Tibial artery (tissue), 4 donors: ENCODE measurements at regions of chr1 and their contacts with region 1.

Region 1: GRCh38 chr1:8314346-8315280 is 3.3 kb upstream of the SLC45A1 start:
- DNase-seq: peak; percentile 56 to 86
- H3K4me3 ChIP-seq: no peak overlapping the region
- H3K27ac ChIP-seq: no peak overlapping the region
- H3K4me1 ChIP-seq: peaks cover 0 to 46% (median 27%) of the 10 kb centered on the region in 4 donors
- H3K27me3 ChIP-seq: no peaks in the 10 kb centered on the region
- CTCF ChIP-seq: peak; percentile 80 to 95

Region 2: GRCh38 chr1:7980984-7981383 is 333.6 kb before region 1 on chr1:
- intact Hi-C with region 1: loop called (anchors 2 kb)
- DNase-seq: peak in 1 of 2 donors; percentile 55
- H3K4me3 ChIP-seq: no peak overlapping the region
- H3K27ac ChIP-seq: no peak overlapping the region
- H3K4me1 ChIP-seq: peaks cover 0 to 17% (median 5%) of the 10 kb centered on the region in 4 donors
- H3K27me3 ChIP-seq: no peaks in the 10 kb centered on the region
- CTCF ChIP-seq: no peak

Region 3: DNA sequence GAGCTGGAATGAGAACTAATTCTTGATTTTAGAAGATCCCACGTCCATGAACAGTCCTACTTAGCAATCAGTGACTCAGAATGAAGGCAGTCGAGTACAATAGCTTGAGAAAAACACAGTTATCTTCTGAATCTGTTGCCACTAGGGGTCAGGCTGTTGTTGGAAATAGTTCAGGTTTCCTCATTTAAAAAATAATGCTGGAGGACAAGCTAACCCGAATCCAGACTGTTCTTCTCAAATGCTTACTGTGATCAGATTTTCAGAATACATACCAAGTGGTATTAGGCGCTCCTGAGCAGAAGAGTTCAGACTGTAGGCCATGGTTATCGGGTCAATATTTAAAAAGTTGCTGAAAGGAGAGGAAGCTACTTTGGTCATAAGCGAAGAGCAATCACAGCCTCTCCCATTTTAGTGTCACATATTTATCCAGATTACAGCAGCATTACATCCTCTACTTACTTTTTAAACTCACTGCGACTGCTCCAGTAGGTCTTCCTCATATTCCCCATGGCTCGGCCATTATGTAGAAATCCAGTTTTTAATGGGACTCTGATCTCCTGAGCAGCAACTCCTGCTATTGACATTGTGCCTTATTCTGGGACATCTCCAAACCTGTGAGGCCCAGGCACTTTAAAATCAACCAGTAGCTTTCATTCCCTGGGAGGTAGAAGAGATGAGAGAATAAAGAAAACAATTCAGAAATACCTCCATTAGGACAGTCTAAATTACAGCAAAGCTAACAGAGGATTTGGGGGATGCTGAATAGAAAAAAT is 299.4 kb before region 1 on chr1:
- intact Hi-C with region 1: loop called (anchors 5 kb)
- DNase-seq: no peak
- H3K4me3 ChIP-seq: peak overlapping the region in 1 of 2 donors; percentile 33
- H3K27ac ChIP-seq: peak overlapping the region; percentile 45 to 98
- H3K4me1 ChIP-seq: peaks cover 0 to 87% (median 58%) of the 10 kb centered on the region in 4 donors
- H3K27me3 ChIP-seq: no peaks in the 10 kb centered on the region
- CTCF ChIP-seq: peak; percentile 60 to 84

Region 4: DNA sequence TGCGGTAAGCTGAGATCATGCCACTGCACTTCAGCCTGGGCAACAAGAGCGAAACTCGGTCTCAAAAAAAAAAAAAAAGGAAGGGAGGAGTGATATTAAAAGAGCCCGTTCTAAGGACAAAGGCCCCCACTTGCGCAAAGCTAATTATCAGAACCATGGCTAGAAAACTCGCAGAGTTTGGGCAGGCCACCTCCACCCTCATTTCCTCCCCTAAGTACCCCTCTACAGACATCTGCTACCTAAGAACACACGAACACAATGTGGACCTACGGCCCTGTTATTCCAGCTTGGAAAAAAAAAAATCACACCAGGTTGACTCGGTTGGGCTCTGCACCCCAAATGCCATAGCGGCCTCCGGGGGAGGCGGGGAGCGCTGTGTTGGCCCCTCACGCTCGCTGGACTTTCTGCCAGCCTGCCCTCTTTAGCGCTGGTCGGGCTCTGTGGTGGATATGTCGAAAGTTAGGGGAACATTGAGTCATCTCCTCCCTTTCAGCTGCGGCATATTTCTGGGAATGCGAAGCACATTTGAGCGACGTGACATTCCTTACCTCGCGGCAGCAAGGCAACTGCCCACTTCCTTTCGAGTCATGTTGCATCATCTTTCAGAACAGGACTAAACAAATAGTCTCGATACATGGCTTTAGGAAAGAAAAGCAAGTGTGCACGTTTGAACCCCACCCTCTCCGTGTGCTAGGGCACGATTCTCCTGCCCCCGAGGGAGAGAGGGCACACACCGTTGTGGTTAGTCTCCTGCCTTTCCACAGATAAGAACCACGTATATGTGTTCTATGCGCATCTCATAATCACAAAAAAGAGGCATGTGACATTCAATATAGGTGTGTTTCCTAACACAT is 102.8 kb before region 1 on chr1:
- intact Hi-C with region 1: loop called (anchors 10 kb)
- DNase-seq: peak; percentile 70 to 89
- H3K4me3 ChIP-seq: no peak overlapping the region
- H3K27ac ChIP-seq: peak overlapping the region; percentile 71 to 82
- H3K4me1 ChIP-seq: peaks cover 0 to 33% (median 11%) of the 10 kb centered on the region in 4 donors
- H3K27me3 ChIP-seq: no peaks in the 10 kb centered on the region
- CTCF ChIP-seq: no peak

Region 5: DNA sequence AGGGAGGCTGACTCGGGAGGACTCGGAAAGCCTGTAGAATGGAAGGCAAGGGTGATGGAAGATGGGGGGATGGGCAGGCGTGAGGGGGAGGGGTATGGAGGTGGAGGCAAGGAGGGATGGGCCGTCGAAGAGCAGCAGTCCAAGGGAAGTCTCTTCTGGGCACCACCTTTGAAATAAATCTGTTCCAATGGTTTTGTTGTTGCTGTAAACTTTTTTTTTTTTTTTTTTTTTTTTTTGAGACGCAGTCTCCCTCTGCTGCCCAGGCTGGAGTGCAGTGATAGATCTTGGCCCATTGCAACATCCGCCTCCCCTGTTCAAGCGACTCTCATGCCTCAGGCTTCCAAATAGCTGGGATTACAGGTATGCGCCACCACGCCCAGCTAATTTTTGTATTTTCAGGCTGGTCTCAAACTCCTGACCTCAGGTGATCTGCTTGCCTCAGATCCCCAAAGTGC is 75.7 kb before region 1 on chr1:
- intact Hi-C with region 1: loop called (anchors 10 kb)
- DNase-seq: peak; percentile 66 to 77
- H3K4me3 ChIP-seq: no peak overlapping the region
- H3K27ac ChIP-seq: peak overlapping the region in 1 of 2 donors; percentile 15
- H3K4me1 ChIP-seq: peaks cover 0 to 13% (median 8%) of the 10 kb centered on the region in 4 donors
- H3K27me3 ChIP-seq: no peaks in the 10 kb centered on the region
- CTCF ChIP-seq: peak; percentile 28 to 32